ENCODE measurements at regions of chr12 and their contacts with region 1.

Region 1: DNA sequence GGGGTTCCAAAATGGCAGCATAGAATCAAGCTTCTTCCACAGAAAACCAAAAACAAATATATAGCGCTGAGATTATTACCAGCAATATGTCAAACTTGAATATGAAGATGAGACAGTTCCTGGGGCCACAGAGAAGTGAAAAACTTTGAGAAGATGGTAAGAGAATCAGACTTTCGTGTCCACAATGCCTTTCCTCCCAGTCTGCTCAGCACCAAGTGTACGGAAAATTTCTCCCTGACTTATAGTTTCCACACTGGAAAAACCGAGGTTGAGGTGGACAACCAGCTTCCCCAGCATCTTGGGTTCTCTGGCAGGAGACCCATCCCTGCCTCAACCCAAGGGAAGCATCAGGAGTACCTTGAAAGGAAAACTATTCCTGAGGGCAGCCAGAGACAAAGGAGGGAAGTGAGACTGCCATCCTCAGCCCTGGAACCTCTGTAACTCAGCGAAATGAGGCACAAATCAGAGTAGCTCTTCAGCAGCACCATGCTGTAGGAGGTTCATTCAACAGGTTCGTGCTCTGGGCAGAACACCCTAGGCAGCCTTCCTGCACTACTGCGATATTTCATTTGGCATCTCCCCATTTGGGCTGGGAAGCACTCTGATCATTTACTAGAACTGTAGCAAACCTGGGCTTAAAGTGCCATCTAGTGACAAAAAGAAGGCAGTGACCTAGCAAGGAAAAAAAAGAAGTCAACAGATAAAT is 52.4 kb upstream of the CAPRIN2 start:
- DNase-seq: peak; percentile 41 to 82
- H3K4me3 ChIP-seq: no peak overlapping the region
- H3K27ac ChIP-seq: no peak overlapping the region
- H3K4me1 ChIP-seq: peaks cover 0 to 6% (median 4%) of the 10 kb centered on the region in 4 donors
- H3K27me3 ChIP-seq: no peaks in the 10 kb centered on the region
- CTCF ChIP-seq: peak in 5 of 7 experiments; percentile 56 to 87 (median 72)
- EP300 ChIP-seq: no peak
- POLR2A ChIP-seq: no peak

Region 2: GRCh38 chr12:29519585-29520182 is 1287.5 kb before region 1 on chr12:
- intact Hi-C with region 1: loop called (anchors 10 kb)
- DNase-seq: peak in 1 of 2 donors; percentile 75
- H3K4me3 ChIP-seq: no peak overlapping the region
- H3K27ac ChIP-seq: no peak overlapping the region
- H3K4me1 ChIP-seq: no peaks in the 10 kb centered on the region
- H3K27me3 ChIP-seq: no peaks in the 10 kb centered on the region
- CTCF ChIP-seq: peak in 4 of 7 experiments; percentile 18 to 64 (median 52)
- EP300 ChIP-seq: no peak
- POLR2A ChIP-seq: no peak

Measured in stomach (tissue), 19 donors.